ENCODE measurements at regions of chr22 and their contacts with region 1.

Region 1: DNA sequence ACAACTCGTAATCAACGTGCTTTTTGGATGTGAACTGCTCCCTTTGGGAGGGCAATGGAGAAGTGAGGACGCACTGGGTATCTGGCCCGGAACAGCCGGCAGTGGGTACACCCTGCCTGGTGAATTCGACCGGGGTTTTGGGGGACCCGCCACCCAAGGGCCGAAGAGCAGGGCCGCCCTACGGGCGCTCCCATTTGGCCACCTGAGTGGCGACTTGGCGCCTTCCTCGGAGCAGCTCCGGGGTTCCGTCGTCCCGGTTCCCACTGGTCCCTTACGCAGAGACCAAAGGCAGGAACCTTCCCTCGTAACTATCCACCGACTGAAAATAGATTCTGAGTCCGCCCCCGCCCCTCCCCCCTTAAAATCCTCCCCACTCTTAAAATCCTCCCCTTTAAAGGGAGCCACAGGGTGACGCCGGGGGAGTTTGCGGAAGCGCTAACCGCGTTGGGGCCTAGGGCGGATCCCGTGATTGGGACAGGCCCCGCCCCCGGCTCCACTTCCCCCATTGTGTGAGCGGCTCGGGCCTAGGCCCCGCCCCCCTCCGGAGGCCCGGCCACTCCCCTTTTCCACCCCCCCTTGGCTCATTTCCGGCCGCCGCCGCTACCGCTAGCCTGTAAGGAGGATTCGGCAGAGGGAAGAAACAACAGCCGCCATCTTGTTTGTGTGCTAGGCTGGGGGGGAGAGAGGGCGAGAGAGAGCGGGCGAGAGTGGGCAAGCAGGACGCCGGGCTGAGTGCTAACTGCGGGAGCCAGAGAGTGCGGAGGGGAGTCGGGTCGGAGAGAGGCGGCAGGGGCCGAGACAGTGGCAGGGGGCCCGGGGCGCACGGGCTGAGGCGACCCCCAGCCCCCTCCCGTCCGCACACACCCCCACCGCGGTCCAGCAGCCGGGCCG is 1.0 kb upstream of the EP300 start:
- DNase-seq: peak; percentile 100
- H3K4me3 ChIP-seq: peak overlapping the region; percentile 78 to 100 (median 90)
- H3K27ac ChIP-seq: peak overlapping the region; percentile 98 to 100 (median 100)
- H3K4me1 ChIP-seq: peaks cover 5 to 35% (median 16%) of the 10 kb centered on the region in 4 donors
- H3K27me3 ChIP-seq: no peaks in the 10 kb centered on the region
- CTCF ChIP-seq: no peak
- EP300 ChIP-seq: no peak
- POLR2A ChIP-seq: peak; percentile 89

Region 2: GRCh38 chr22:40950962-40951794 is 140.2 kb before region 1 on chr22 and contains the start of gene RBX1:
- in situ Hi-C with region 1: loop called in 3 of 4 experiments (anchors 5 to 10 kb)
- intact Hi-C with region 1: loop called (anchors 1 kb)
- DNase-seq: peak; percentile 99
- H3K4me3 ChIP-seq: peak within 1 kb of the TSS; percentile 69 to 94 (median 74)
- H3K27ac ChIP-seq: peak within 1 kb of the TSS; percentile 92 to 98 (median 96)
- H3K4me1 ChIP-seq: peaks cover 10 to 29% (median 15%) of the 10 kb centered on the region in 4 donors
- H3K27me3 ChIP-seq: no peaks in the 10 kb centered on the region
- CTCF ChIP-seq: no peak
- EP300 ChIP-seq: peak; percentile 50
- POLR2A ChIP-seq: peak; percentile 94
- total RNA-seq, gene RBX1: 7.8 to 36.9 (median 24.9) TPM

Region 3: GRCh38 chr22:40975366-40975765 is 116.0 kb before region 1 on chr22:
- in situ Hi-C with region 1: no loop called
- intact Hi-C with region 1: no loop called
- DNase-seq: no peak
- H3K4me3 ChIP-seq: no peak overlapping the region
- H3K27ac ChIP-seq: no peak overlapping the region
- H3K4me1 ChIP-seq: no peaks in the 10 kb centered on the region
- H3K27me3 ChIP-seq: no peaks in the 10 kb centered on the region
- CTCF ChIP-seq: no peak
- EP300 ChIP-seq: no peak
- POLR2A ChIP-seq: no peak